ENCODE measurements at regions of chr9 and their contacts with region 1.

Region 1: GRCh38 chr9:137240861-137241489 is at the start of gene TUBB4B:
- DNase-seq: peak; percentile 99
- ATAC-seq: peak; percentile 80
- H3K4me3 Mint-ChIP-seq: peak within 1 kb of the TSS; percentile 86
- H3K27ac Mint-ChIP-seq: peak within 1 kb of the TSS; percentile 94
- H3K4me1 Mint-ChIP-seq: peaks cover 40% of the 10 kb centered on the region
- H3K27me3 Mint-ChIP-seq: no peaks in the 10 kb centered on the region
- total RNA-seq, gene TUBB4B: 417 to 432 TPM

Region 2: DNA sequence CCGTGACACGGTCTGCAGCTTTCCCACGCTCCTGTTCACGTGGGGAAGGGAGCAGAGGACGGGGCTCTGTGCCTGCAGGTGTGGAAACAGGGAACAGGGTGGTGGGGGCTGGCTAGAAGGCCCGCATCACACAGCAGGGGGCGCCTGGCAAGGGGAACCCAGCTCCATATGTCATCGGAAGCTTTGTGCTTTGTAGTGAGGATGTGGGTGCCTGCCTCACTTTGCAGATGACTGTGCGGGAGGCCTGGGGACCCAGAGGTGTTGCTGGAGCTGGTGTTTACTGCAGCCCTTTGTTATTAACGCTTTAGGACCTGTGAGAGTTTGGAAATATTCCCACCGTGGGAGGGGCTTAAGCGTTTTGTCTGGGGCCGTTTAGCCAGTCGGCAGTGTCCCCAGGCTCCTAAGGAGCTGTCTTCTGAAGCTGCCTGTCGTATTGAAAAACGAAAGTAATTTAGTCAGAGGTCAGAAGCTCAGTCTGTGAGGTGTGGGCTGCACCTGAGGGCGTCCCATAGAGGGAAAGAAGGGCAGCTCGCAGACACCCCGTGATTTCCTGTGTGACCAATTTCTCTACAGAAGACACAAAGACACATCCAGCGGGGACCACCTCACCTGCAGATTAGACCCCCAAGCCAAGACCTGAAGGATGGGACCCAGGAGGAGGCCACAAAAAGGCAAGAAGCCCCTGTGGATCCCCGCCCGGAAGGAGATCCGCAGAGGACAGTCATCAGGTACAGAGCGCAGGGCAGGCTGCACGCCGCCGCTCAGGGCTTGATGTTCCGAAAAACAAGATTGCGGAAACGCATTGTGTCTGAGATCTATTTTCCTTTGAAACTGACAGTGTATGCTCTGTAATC is 145.1 kb before region 1 on chr9:
- CTCF ChIA-PET with region 1: interaction called, 13 read pairs
- POLR2A ChIA-PET with region 1: interaction called, 7 read pairs
- DNase-seq: peak; percentile 94
- ATAC-seq: peak; percentile 99
- H3K4me3 Mint-ChIP-seq: peak overlapping the region; percentile 76
- H3K27ac Mint-ChIP-seq: peak overlapping the region; percentile 97
- H3K4me1 Mint-ChIP-seq: peaks cover 23% of the 10 kb centered on the region
- H3K27me3 Mint-ChIP-seq: no peaks in the 10 kb centered on the region

Region 3: DNA sequence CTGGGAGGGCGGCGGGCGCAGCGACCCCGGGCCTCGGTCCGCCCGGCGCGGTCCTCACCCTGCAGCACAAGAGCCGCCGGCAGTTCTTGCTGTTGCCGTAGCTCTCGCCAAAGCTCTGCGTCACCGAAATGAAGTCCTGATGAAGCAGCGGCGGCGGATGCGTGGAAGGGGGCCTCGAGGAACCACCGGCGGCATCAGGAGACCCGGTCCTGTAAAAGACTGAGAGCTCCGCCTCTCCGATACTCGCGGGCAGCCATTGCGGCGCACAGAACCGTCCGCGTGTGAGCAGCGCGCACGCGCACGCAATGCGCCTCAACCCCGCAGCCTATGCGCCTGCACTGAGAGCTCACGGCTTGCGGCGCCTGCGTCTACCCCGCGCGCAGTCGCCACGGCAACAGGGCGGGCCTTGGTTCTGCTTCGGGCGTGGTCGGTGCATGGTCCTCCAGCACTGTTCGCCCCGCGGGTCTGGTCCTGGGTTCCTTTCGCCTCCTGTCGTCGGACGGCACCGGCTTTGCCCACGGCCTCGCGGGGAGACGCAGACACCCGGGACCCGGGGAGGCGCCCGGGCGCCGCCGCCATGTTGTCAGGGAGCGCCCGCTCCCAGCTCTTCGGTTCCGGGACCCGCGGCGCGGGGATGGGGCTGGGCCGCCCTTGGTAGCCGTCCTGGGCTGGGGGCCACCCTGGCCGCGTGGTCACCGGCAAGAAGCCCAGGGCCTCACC is 111.4 kb before region 1 on chr9:
- CTCF ChIA-PET with region 1: interaction called, 22 read pairs
- POLR2A ChIA-PET with region 1: interaction called, 15 read pairs
- DNase-seq: peak; percentile 93
- ATAC-seq: peak; percentile 95
- H3K4me3 Mint-ChIP-seq: peak overlapping the region; percentile 83
- H3K27ac Mint-ChIP-seq: peak overlapping the region; percentile 82
- H3K4me1 Mint-ChIP-seq: peaks cover 31% of the 10 kb centered on the region
- H3K27me3 Mint-ChIP-seq: peaks cover 7% of the 10 kb centered on the region

Region 4: GRCh38 chr9:137188490-137189296 is 52.3 kb before region 1 on chr9 and contains the starts of genes ANAPC2 and SSNA1:
- CTCF ChIA-PET with region 1: interaction called, 8 read pairs
- POLR2A ChIA-PET with region 1: interaction called, 17 read pairs
- DNase-seq: peak; percentile 93
- ATAC-seq: peak; percentile 81
- H3K4me3 Mint-ChIP-seq: peak within 1 kb of the TSS; percentile 97
- H3K27ac Mint-ChIP-seq: peak within 1 kb of the TSS; percentile 97
- H3K4me1 Mint-ChIP-seq: peaks cover 42% of the 10 kb centered on the region
- H3K27me3 Mint-ChIP-seq: no peaks in the 10 kb centered on the region
- total RNA-seq, gene ANAPC2: 60.2 to 64.1 TPM
- total RNA-seq, gene SSNA1: 88.2 to 90.0 TPM

Region 5: DNA sequence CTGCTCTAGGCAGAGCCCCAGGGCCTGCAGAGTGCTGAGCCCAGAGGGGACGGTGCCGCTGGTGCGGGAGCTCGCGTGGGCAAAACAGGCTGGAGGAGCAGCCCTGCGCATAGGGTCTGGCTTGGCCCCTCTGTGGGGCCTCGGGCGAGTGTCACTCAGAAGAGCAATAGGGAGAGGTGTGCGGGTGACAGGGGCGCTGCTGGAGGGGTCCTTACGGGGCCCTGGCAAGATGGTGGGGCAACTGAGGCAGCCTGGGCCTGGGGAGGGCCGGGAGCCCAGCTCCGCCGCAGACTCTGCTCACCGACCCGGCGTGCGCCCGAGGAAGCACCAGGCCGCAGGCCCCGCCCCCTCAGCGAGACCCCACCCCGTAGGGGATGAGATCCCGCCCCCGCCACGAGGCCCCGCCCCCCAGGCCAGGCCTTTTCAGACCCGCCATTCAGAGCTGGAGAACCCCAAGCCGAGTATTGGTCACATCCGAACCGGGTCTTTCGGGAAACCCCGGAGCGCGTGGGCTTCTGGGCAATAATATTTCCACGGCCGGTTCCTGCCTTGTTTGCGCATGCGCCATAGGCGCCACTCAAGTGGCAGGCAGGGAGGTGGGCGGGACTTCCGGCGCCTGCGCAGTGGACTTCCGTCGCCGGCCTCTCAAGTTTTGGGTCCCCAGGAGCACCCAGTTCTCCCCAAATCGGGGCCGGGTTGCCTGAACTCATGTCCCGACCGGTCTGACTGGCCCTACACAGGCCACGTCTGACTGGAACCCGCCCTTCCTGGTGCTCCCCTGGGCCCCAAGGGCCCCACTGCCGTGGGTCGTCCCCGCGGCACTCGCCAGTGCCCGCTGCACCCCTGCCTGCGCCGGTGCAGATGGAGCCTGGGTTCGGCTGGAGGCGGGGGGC is 17.7 kb before region 1 on chr9:
- CTCF ChIA-PET with region 1: interaction called, 73 read pairs
- POLR2A ChIA-PET with region 1: interaction called, 21 read pairs
- DNase-seq: peak; percentile 98
- ATAC-seq: peak; percentile 90
- H3K4me3 Mint-ChIP-seq: peak overlapping the region; percentile 80
- H3K27ac Mint-ChIP-seq: peak overlapping the region; percentile 87
- H3K4me1 Mint-ChIP-seq: peaks cover 19% of the 10 kb centered on the region
- H3K27me3 Mint-ChIP-seq: no peaks in the 10 kb centered on the region